ENCODE measurements at regions of chr2 and their contacts with region 1.

Region 1: GRCh38 chr2:115070002-115070401 is 627.6 kb downstream of the DPP10 start:
- DNase-seq: no peak
- H3K4me3 ChIP-seq: no peak overlapping the region
- H3K27ac ChIP-seq: no peak overlapping the region
- H3K4me1 ChIP-seq: no peaks in the 10 kb centered on the region
- H3K27me3 ChIP-seq: no peaks in the 10 kb centered on the region
- CTCF ChIP-seq: no peak

Region 2: GRCh38 chr2:115183144-115183543 is 113.1 kb after region 1 on chr2:
- CTCF ChIA-PET with region 1: no interaction called
- POLR2A ChIA-PET with region 1: no interaction called
- intact Hi-C with region 1: no loop called
- DNase-seq: no peak
- H3K4me3 ChIP-seq: no peak overlapping the region
- H3K27ac ChIP-seq: no peak overlapping the region
- H3K4me1 ChIP-seq: no peaks in the 10 kb centered on the region
- H3K27me3 ChIP-seq: peaks cover 10% of the 10 kb centered on the region
- CTCF ChIP-seq: no peak

Region 3: DNA sequence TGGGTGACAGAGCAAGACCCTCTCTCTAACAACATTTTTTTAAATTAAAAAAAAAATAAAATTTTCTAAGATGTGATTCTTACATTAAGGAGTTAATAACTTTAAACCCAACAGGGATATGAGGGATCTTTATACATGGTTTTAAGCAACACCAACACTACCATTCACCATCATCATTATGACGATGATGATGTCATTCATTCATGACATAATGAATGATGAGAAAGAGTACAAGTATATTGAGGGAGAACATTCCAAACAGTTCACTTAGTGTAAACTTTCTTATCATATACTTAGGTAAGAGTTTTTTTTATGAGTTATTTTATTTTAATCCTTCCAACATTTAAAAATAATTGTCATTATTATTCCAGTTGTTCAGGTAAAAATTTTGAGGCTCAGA is 235.7 kb after region 1 on chr2:
- CTCF ChIA-PET with region 1: no interaction called
- POLR2A ChIA-PET with region 1: interaction called, 11 read pairs
- intact Hi-C with region 1: no loop called
- DNase-seq: no peak
- H3K4me3 ChIP-seq: no peak overlapping the region
- H3K27ac ChIP-seq: no peak overlapping the region
- H3K4me1 ChIP-seq: no peaks in the 10 kb centered on the region
- H3K27me3 ChIP-seq: peaks cover 11% of the 10 kb centered on the region
- CTCF ChIP-seq: no peak

Measured in PC-9 (cell line).